Spleen (tissue), 13 donors: ENCODE measurements at regions of chr3 and their contacts with region 1.

Region 1: GRCh38 chr3:37024092-37024491 is 30.8 kb downstream of the MLH1 start:
- DNase-seq: no peak
- H3K4me3 ChIP-seq: no peak overlapping the region
- H3K27ac ChIP-seq: peak overlapping the region in 1 of 8 donors; percentile 12
- H3K4me1 ChIP-seq: peaks cover 0 to 29% (median 13%) of the 10 kb centered on the region in 6 donors
- H3K27me3 ChIP-seq: no peaks in the 10 kb centered on the region
- CTCF ChIP-seq: peak in 8 of 11 experiments; percentile 24 to 60 (median 46)
- POLR2A ChIP-seq: no peak

Region 2: GRCh38 chr3:37210230-37210629 is 186.1 kb after region 1 on chr3:
- intact Hi-C with region 1: loop called (anchors 10 kb)
- DNase-seq: no peak
- H3K4me3 ChIP-seq: no peak overlapping the region
- H3K27ac ChIP-seq: no peak overlapping the region
- H3K4me1 ChIP-seq: peaks cover 0 to 10% (median 4%) of the 10 kb centered on the region in 6 donors
- H3K27me3 ChIP-seq: no peaks in the 10 kb centered on the region
- CTCF ChIP-seq: no peak
- POLR2A ChIP-seq: no peak